ENCODE measurements at regions of chr1 and their contacts with region 1.

Region 1: DNA sequence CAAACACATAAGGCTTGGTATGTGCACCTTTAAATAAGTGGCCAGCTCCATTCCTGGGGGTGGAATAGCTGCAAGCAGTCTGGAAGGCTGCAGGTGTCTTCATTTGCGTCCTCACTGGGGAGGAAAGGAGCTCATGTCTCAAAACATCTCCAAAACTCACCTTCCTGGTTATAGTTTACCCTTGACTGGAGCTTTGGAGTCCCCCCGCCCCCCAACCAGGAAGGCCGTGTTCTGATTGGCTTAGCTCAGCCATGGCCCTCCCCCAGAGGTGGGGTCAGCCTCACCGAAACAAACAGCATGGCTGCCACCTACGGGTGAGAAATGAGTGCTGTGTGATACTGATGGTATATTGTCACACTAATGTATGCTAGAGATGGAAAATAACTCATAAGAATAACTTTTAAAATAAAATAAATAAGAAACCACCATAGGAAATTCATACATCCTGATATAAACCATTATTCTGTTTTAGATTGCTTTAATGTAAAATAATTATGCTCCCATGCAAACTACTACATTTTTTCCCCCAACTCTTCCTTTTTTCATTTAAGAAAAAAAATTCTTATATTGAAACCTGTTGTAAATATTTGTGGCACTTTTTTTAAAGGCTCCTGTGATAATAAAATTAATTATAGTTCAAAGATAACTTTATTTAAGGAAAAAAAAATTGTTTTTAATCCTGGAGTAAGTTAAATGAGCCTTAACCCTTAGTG is 90.8 kb downstream of the ZP4 start:
- DNase-seq: peak; percentile 91
- H3K4me3 ChIP-seq: peak overlapping the region in 1 of 2 experiments; percentile 11; a peak in 1 of 4 replicates
- H3K27ac ChIP-seq: no peak overlapping the region
- H3K4me1 ChIP-seq: peaks cover 0 to 2% of the 10 kb centered on the region in 2 experiments; a peak in 2 of 4 replicates
- H3K27me3 ChIP-seq: no peaks in the 10 kb centered on the region
- CTCF ChIP-seq: peak; percentile 68
- EP300 ChIP-seq: no peak
- RAD21 ChIP-seq: peak; percentile 92

Region 2: DNA sequence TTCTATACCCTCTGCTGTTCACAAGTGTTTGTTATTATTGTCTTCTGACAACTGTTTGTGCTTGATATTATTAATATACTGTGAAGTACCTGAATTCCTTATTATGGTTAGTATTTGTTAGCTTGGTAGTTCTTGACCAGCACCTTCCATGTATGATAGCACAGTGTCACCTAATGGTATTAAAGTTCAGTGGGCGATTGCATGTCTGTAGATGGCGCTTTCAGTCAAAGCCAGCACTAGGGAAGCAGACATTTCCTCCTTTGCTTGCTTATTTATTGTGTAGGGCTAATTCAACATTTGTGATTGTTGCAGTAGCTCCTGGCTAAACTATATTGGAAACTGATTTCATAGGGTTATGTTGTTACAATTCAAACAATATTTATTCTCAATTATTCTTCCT is 127.2 kb before region 1 on chr1:
- CTCF ChIA-PET with region 1: interaction called, 38 read pairs
- POLR2A ChIA-PET with region 1: no interaction called
- DNase-seq: peak; percentile 39
- H3K4me3 ChIP-seq: no peak overlapping the region
- H3K27ac ChIP-seq: no peak overlapping the region
- H3K4me1 ChIP-seq: no peaks in the 10 kb centered on the region; a peak in 1 of 4 replicates
- H3K27me3 ChIP-seq: no peaks in the 10 kb centered on the region
- CTCF ChIP-seq: peak; percentile 21; the same call in 1 of the 2 replicates
- EP300 ChIP-seq: no peak
- RAD21 ChIP-seq: peak; percentile 74

Region 3: DNA sequence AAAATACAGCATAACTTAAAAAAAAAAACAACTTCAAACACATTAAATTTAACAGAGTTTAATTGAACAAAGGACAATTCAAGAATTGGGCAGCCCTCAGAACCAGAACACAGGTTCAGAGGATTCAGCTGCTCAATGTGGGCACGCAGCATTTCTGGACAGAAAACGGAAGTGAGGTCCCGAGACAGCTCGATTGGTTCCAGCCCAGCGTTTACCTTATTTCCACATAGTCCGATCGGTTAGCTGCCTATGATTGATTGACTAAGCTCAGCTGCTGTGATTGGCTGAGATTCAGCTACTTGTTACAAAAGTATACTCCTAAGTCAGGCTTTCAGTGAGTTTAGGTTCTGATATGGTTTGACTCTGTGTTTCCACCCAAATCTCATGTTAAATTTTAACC is 57.5 kb after region 1 on chr1:
- CTCF ChIA-PET with region 1: no interaction called
- POLR2A ChIA-PET with region 1: no interaction called
- DNase-seq: no peak
- H3K4me3 ChIP-seq: no peak overlapping the region
- H3K27ac ChIP-seq: no peak overlapping the region
- H3K4me1 ChIP-seq: peaks cover 0 to 2% of the 10 kb centered on the region in 2 experiments; a peak in 1 of 4 replicates
- H3K27me3 ChIP-seq: no peaks in the 10 kb centered on the region
- CTCF ChIP-seq: no peak
- EP300 ChIP-seq: no peak
- RAD21 ChIP-seq: no peak

Measured in SK-N-SH (cell line).